ENCODE measurements at regions of chr18 and their contacts with region 1.

Region 1: DNA sequence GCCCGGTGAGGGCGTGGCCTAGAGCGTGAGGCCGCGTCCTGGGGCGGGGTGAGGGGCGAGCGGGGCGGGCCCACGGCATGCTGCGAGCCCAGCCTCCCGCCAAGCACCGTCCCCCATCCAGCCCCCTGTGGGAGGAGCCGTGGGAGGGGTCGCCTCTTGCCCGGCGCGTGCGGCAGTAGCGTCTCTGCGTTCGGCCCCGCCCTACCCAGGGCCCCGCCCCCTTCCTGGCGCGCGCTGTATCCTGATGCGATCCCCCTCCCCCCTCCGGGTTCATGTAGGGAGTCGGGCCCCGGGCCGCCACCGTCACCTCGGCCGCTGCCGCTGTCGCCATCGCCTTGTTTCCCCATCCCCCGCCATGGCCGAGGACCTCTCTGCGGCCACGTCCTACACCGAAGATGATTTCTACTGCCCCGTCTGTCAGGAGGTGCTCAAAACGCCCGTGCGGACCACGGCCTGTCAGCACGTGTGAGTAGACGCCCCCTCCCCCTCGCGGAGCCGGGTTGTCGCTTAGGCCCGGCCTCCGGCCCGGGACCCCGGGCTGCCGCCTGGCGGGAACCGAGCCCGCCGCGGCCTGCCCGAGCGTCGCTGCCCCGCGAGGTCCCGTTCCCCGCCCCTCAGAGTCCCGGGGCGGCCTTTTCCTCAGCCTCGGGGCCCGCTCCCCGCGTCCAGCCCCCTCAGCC is 888 bp downstream of the RNF138 start:
- DNase-seq: peak; percentile 99 to 100
- H3K4me3 ChIP-seq: peak overlapping the region; percentile 92 to 99 (median 92)
- H3K27ac ChIP-seq: peak overlapping the region; percentile 98 to 100 (median 99)
- H3K4me1 ChIP-seq: peaks cover 22 to 48% (median 41%) of the 10 kb centered on the region in 4 donors
- H3K27me3 ChIP-seq: no peaks in the 10 kb centered on the region
- CTCF ChIP-seq: no peak
- EP300 ChIP-seq: no peak
- POLR2A ChIP-seq: peak in 1 of 4 donors; percentile 20

Region 2: DNA sequence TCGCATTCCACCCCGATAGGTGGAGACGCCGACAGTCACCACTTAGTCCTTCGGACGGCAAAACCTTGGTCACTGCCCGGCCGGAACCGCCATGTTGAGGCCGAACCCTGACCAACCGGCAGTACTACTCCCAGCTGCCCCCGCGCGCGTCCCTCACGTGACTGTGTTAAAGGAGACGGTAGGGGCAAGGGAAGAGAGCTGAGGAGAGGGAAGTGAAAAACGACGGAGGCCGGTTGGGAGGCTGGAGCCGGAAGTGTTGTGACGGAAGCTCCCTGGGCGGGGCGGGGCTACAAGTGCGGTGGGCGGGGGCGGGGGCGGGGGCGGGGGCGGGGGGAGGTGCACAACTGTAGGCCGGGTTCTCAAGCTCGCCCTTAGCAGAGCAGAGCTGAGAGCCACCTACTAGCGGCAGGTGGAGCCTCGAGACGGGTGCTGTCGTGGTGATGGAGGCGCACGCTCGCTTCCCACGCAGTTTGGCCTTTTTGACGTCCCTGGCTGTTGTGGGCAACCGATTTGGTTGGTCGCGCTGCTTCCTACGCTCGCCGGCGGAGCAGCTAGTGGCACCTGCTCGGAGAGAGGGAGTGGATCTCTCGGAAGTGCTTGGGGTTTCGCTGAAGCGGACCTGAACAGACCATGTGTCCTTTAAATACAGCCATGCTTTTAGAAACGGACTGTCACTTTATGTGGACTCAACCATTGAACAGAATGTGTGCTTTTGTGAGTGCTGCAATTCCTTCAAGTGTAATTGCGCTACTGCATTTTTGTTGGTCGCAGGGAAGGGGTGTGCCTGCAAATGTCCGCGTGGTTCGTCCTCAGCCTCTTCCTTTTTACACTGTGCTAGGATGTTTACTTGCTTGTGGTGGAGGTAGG is 149.3 kb before region 1 on chr18 and contains the start of gene TRAPPC8:
- intact Hi-C with region 1: loop called (anchors 10 kb)
- DNase-seq: peak; percentile 99
- H3K4me3 ChIP-seq: peak within 1 kb of the TSS; percentile 71 to 95 (median 90)
- H3K27ac ChIP-seq: peak within 1 kb of the TSS; percentile 86 to 96 (median 93)
- H3K4me1 ChIP-seq: peaks cover 17 to 51% (median 41%) of the 10 kb centered on the region in 4 donors
- H3K27me3 ChIP-seq: no peaks in the 10 kb centered on the region
- CTCF ChIP-seq: no peak
- EP300 ChIP-seq: no peak
- POLR2A ChIP-seq: no peak
- total RNA-seq, gene TRAPPC8: 33.5 to 75.6 (median 43.5) TPM

Measured in stomach (tissue), 19 donors.